AG04449 (cell line): ENCODE measurements at regions of chr6 and their contacts with region 1.

Region 1: DNA sequence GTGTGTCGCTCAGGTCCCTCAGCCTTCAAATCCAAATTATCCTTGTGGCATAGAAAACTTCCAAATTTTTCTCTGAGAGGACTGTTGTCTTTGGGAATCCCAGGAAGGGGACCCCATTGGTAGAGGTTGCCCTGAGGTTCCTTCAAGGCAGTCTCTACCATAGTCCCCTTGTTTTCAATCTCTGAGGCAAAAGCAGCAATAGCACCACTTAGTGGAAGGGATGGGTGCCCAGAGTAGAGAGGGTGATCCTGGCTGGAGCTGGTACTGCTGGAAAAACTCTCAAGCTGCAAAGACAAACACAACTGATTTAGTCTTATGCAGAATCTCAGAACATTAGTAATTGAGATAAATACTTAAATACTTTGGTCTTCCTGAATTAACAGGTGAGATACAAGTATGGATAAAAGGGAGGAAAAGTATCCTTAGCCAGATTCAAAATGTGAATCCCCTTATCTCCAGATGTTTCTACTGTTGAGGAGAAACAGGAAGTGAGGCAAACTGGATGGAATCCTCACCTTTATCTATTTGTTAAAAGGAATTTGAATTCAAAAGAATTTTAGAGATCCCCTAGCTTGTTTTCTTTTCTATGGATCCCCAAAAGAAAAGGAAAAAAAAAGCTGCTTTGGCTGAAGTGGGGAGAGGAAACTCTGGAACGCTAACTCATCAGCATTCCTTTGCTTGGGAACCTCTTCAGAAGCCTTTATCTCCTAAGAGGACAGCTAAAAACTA is 13.4 kb downstream of the ZNF318 start:
- DNase-seq: no peak
- H3K4me3 ChIP-seq: no peak overlapping the region
- CTCF ChIP-seq: peak; percentile 34

Region 2: GRCh38 chr6:43263314-43264178 is 92.5 kb before region 1 on chr6:
- CTCF ChIA-PET with region 1: interaction called, 16 read pairs
- POLR2A ChIA-PET with region 1: no interaction called
- DNase-seq: no peak
- H3K4me3 ChIP-seq: no peak overlapping the region
- CTCF ChIP-seq: peak; percentile 96

Region 3: GRCh38 chr6:43369174-43370022 is 13.4 kb after region 1 on chr6 and contains the start of gene ZNF318:
- CTCF ChIA-PET with region 1: interaction called, 23 read pairs
- POLR2A ChIA-PET with region 1: interaction called, 5 read pairs
- DNase-seq: peak; percentile 71
- H3K4me3 ChIP-seq: peak within 1 kb of the TSS; percentile 74
- CTCF ChIP-seq: no peak